K562 (cell line): ENCODE measurements at regions of chr1 and their contacts with region 1.

Region 1: DNA sequence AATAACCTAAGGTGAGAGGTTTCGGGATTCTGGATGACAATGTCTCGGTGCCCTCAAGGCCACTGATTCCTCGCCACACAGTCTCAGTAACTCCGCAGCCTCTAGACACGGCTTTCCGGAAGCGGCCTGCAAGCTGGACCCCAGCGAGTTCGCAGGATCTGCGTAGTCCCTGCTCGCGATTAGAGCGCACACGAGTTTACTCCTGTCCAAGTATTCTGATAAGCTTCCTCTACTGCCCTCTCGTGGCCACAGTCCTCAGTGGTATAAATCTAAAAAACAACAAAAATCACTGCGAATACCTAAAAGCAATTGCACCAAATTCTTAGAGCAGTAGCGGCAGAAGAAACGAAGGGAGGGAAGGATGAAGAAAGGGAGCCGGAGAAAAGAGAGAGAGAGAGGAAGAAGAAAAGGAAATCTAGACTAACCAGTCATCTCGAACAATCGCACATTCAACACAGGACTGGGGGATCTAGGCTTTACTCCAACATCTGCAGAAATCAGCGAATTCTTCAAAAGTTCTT is 1.1 kb upstream of the PLXNA2 start:
- DNase-seq: peak; percentile 82 to 93 (median 86)
- ATAC-seq: peak; percentile 85
- H3K4me3 ChIP-seq: no peak overlapping the region
- H3K27ac ChIP-seq: no peak overlapping the region
- H3K4me1 ChIP-seq: peaks cover 0 to 19% of the 10 kb centered on the region in 2 experiments; a peak in 3 of 5 replicates
- H3K27me3 ChIP-seq: peaks cover 23 to 50% of the 10 kb centered on the region in 2 experiments
- CTCF ChIP-seq: peak; percentile 85 to 95 (median 89)
- EP300 ChIP-seq: no peak
- POLR2A ChIP-seq: no peak
- RAD21 ChIP-seq: peak; percentile 88 to 93

Region 2: DNA sequence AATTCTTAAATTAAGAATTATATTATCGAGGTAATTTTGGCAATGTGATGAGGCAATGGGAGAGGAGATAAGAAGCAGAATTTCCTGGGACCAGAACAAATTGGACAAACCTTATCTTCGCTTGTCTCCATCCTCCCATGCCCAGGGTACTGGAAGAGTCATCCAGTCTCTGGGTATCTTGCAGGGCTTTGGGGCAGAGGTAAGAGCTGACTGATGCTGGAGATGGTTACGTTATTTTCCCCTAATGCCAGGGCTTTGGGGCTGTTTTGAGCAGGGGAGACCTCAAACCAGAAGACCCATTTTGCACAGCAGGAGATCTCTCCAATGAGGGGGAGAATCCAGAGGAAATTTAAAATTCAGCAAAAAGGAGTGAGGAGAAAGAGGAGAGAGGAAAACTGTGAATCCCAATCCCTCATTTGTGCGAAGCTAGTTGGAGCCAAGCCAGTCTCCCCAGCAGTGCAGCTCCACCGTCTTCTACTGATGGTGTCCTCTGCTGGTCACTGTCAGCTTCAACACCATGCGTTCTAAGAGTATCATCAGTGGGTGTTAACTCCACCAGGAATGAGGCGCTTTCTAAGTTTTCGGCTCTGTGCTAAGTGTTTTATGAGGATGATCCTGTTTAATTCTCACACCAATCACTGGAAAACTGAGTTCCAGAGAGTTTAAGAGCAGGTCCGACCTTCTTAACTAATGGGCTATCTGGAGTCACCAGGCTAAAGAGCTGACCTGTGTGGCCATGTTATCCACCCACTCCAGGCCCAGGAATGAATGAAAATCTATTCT is 247.6 kb before region 1 on chr1:
- CTCF ChIA-PET with region 1: interaction called, 10 read pairs
- POLR2A ChIA-PET with region 1: no interaction called
- in situ Hi-C with region 1: no loop called
- intact Hi-C with region 1: no loop called
- DNase-seq: peak; percentile 75 to 84 (median 77)
- ATAC-seq: peak; percentile 97
- H3K4me3 ChIP-seq: no peak overlapping the region
- H3K27ac ChIP-seq: no peak overlapping the region
- H3K4me1 ChIP-seq: no peaks in the 10 kb centered on the region; a peak in 1 of 5 replicates
- H3K27me3 ChIP-seq: peaks cover 10 to 32% of the 10 kb centered on the region in 2 experiments; a peak in 4 of 5 replicates
- CTCF ChIP-seq: peak; percentile 82 to 95 (median 89)
- EP300 ChIP-seq: no peak
- POLR2A ChIP-seq: no peak
- RAD21 ChIP-seq: peak; percentile 64 to 80

Region 3: GRCh38 chr1:208024406-208024805 is 220.8 kb before region 1 on chr1:
- CTCF ChIA-PET with region 1: interaction called, 8 read pairs
- POLR2A ChIA-PET with region 1: interaction called, 11 read pairs
- in situ Hi-C with region 1: loop called (anchors 5 kb)
- intact Hi-C with region 1: loop called (anchors 2 kb)
- DNase-seq: no peak
- ATAC-seq: no peak
- H3K4me3 ChIP-seq: no peak overlapping the region
- H3K27ac ChIP-seq: no peak overlapping the region
- H3K4me1 ChIP-seq: no peaks in the 10 kb centered on the region
- H3K27me3 ChIP-seq: peaks cover 46 to 60% of the 10 kb centered on the region in 2 experiments
- CTCF ChIP-seq: no peak
- EP300 ChIP-seq: no peak
- POLR2A ChIP-seq: no peak
- RAD21 ChIP-seq: no peak

Region 4: DNA sequence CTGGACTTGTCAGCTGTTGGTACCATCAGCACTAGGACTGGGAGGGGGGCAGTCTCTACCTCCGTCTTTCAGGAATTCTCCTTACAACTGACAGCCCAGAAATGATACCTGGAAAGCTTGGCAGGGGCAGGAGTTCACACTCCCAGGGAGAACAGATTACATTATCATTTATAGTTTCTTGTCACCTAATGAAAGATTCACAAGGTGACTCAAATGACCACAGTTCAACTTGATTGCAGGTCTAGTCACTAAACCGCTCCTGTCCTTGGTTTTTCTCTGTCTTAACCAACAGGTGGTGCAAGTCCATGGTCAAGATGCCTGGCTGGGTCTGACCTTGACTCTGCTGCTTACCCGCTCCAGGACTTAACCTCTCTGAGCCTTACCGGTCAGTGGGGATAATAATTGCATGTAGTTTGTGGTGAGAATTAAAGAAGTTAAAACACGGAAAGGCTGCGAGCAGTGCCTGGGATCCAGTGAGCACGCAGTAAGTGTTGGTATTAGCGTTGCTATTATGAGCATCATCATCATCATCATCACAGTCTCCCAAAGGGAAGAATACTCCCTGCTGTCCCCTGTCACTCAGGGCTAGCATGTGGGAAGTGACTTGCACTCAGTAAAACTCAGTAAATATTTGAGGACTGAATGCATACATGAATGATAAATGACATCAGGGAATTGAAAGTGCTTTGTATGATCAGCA is 209.0 kb before region 1 on chr1:
- CTCF ChIA-PET with region 1: interaction called, 9 read pairs
- POLR2A ChIA-PET with region 1: no interaction called
- in situ Hi-C with region 1: no loop called
- intact Hi-C with region 1: loop called (anchors 2 kb)
- DNase-seq: peak; percentile 55 to 66 (median 62)
- ATAC-seq: peak; percentile 87
- H3K4me3 ChIP-seq: no peak overlapping the region
- H3K27ac ChIP-seq: no peak overlapping the region
- H3K4me1 ChIP-seq: peaks cover 5 to 6% of the 10 kb centered on the region in 2 experiments; a peak in 4 of 5 replicates
- H3K27me3 ChIP-seq: peaks cover 30 to 71% of the 10 kb centered on the region in 2 experiments; a peak in 4 of 5 replicates
- CTCF ChIP-seq: peak; percentile 64 to 78 (median 69)
- EP300 ChIP-seq: no peak
- POLR2A ChIP-seq: no peak
- RAD21 ChIP-seq: peak in 1 of 2 experiments; percentile 72; a peak in 3 of 4 replicates

Region 5: GRCh38 chr1:208115924-208116640 is 129.2 kb before region 1 on chr1:
- CTCF ChIA-PET with region 1: no interaction called
- POLR2A ChIA-PET with region 1: no interaction called
- in situ Hi-C with region 1: loop called (anchors 5 kb)
- intact Hi-C with region 1: loop called (anchors 5 kb)
- DNase-seq: no peak
- ATAC-seq: no peak
- H3K4me3 ChIP-seq: no peak overlapping the region
- H3K27ac ChIP-seq: no peak overlapping the region
- H3K4me1 ChIP-seq: no peaks in the 10 kb centered on the region
- H3K27me3 ChIP-seq: peaks cover 21 to 48% of the 10 kb centered on the region in 2 experiments
- CTCF ChIP-seq: no peak
- EP300 ChIP-seq: no peak
- POLR2A ChIP-seq: no peak
- RAD21 ChIP-seq: no peak

Region 6: GRCh38 chr1:208122612-208123358 is 122.5 kb before region 1 on chr1:
- CTCF ChIA-PET with region 1: no interaction called
- POLR2A ChIA-PET with region 1: no interaction called
- in situ Hi-C with region 1: loop called (anchors 5 kb)
- intact Hi-C with region 1: loop called (anchors 5 kb)
- DNase-seq: no peak
- ATAC-seq: no peak
- H3K4me3 ChIP-seq: no peak overlapping the region
- H3K27ac ChIP-seq: no peak overlapping the region
- H3K4me1 ChIP-seq: no peaks in the 10 kb centered on the region
- H3K27me3 ChIP-seq: peaks cover 16 to 45% of the 10 kb centered on the region in 2 experiments
- CTCF ChIP-seq: no peak
- EP300 ChIP-seq: no peak
- POLR2A ChIP-seq: no peak
- RAD21 ChIP-seq: no peak

Region 7: DNA sequence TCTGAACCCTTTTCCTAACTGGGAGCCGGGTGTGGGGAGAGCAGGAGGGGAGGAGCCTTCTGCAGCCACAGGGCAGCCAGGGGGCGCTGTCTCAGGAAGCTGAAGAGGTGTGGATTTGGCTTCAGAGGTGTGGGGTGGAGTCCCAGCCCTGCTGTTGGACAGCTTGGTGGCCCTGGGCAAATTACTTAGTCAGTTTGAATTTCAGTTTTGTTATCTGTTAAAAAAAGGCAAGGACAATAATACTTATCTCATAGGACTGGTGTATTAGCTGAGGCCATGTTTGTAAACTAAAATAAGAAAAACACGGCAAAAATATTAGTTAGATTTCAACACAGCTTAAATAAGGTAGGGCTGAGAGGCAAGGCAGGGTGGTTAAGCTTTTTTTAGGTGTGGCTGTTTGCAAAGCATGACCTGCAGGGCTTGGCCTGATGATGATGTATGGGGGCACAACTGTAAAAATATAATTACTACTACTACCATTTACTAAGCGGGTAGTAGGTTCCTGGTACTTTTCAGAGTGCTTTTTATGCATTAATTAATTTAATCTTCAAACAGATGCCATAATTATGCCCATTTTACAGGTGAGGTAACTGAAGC is 112.9 kb before region 1 on chr1:
- CTCF ChIA-PET with region 1: interaction called, 22 read pairs
- POLR2A ChIA-PET with region 1: interaction called, 4 read pairs
- in situ Hi-C with region 1: no loop called
- intact Hi-C with region 1: loop called (anchors 1 kb)
- DNase-seq: peak; percentile 91 to 96 (median 93)
- ATAC-seq: peak; percentile 100
- H3K4me3 ChIP-seq: no peak overlapping the region
- H3K27ac ChIP-seq: no peak overlapping the region
- H3K4me1 ChIP-seq: no peaks in the 10 kb centered on the region; a peak in 2 of 5 replicates
- H3K27me3 ChIP-seq: peaks cover 13 to 47% of the 10 kb centered on the region in 2 experiments; a peak in 4 of 5 replicates
- CTCF ChIP-seq: peak; percentile 95 to 98 (median 98)
- EP300 ChIP-seq: peak; percentile 25; the same call in 1 of the 2 replicates
- POLR2A ChIP-seq: no peak
- RAD21 ChIP-seq: peak; percentile 83 to 88